ENCODE measurements at regions of chr17 and their contacts with region 1.

Region 1: GRCh38 chr17:29124117-29124924 is 55.9 kb downstream of the MYO18A start:
- DNase-seq: peak in 14 of 35 experiments; percentile 1 to 71 (median 24)
- ATAC-seq: peak; percentile 76 to 90 (median 86)
- H3K4me3 ChIP-seq: no peak overlapping the region
- H3K4me3 Mint-ChIP-seq: no peak overlapping the region
- H3K27ac ChIP-seq: no peak overlapping the region
- H3K27ac Mint-ChIP-seq: no peak overlapping the region
- H3K4me1 ChIP-seq: peaks cover 0 to 8% of the 10 kb centered on the region in 2 experiments
- H3K4me1 Mint-ChIP-seq: peaks cover 5 to 9% (median 9%) of the 10 kb centered on the region in 3 donors
- H3K27me3 ChIP-seq: no peaks in the 10 kb centered on the region
- H3K27me3 Mint-ChIP-seq: no peaks in the 10 kb centered on the region

Region 2: DNA sequence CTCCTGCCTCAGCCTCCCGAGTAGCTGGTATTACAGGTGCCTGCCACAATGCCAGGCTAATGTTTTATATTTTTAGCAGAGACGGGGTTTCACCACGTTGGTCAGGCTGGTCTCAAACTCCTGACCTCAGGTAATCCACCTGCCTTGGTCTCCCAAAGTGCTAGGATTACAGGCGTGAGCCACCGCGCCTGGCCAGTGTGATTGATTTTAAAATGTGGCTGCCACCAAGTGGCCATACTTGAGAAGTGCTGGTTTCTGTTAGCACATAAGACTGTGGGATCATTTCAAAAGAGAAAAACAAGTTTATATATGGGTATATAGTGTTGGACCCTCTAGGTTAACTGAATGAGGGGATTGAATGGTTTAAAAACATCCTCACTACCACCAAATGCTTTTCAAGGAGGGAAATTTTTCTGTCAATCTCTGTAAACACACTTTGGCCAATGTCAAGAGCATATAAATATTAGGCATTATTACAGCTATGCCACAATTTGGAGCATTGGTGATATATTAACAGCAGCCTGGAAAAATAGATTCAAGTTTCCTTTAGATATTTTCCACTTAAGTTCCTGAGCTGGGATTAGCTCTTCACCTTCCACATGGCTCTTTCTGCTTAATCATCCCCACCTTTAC is 207.9 kb before region 1 on chr17:
- CTCF ChIA-PET with region 1: no interaction called
- POLR2A ChIA-PET with region 1: no interaction called
- DNase-seq: peak in 23 of 35 experiments; percentile 23 to 66 (median 38)
- ATAC-seq: peak; percentile 79 to 82 (median 80)
- H3K4me3 ChIP-seq: no peak overlapping the region
- H3K4me3 Mint-ChIP-seq: no peak overlapping the region
- H3K27ac ChIP-seq: no peak overlapping the region
- H3K27ac Mint-ChIP-seq: peak overlapping the region; percentile 71 to 74
- H3K4me1 ChIP-seq: no peaks in the 10 kb centered on the region
- H3K4me1 Mint-ChIP-seq: peaks cover 7 to 12% (median 10%) of the 10 kb centered on the region in 3 donors
- H3K27me3 ChIP-seq: no peaks in the 10 kb centered on the region
- H3K27me3 Mint-ChIP-seq: no peaks in the 10 kb centered on the region

Region 3: DNA sequence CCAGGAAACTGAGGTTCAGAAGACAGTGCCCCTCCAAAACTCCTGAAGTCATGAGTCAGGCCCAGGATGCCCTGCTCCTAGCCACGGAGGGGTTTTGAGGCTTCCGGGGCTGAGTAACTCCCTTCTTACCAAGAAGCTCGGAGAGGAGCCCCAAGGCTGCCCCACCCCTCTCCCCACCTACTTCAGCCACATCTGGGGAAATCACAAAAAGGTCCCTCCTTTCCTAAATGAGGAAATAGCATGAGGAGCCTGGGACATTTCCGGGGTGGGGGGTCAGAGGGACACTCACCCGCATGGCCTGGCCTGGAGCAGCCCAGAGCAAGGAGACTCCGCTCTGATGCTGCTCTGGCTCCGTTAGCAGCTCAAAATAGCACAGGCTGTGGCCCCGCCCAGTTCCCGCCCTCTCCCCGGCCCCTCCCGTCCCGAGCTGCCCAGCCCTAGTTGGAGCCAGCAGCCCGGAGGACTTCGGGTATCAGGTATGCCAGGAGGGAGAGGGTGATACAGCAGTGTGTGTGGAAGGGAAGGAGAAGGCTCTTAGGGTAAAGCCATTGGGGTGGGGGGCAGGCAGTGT is 15.8 kb after region 1 on chr17:
- CTCF ChIA-PET with region 1: interaction called, 3 to 14 read pairs
- POLR2A ChIA-PET with region 1: interaction called, 3 to 4 read pairs
- DNase-seq: peak; percentile 44 to 81 (median 62)
- ATAC-seq: peak; percentile 64 to 78 (median 76)
- H3K4me3 ChIP-seq: peak overlapping the region; percentile 66 to 81
- H3K4me3 Mint-ChIP-seq: peak overlapping the region; percentile 88 to 89 (median 88)
- H3K27ac ChIP-seq: peak overlapping the region; percentile 77
- H3K27ac Mint-ChIP-seq: peak overlapping the region; percentile 97 to 98
- H3K4me1 ChIP-seq: peaks cover 30 to 74% of the 10 kb centered on the region in 2 experiments
- H3K4me1 Mint-ChIP-seq: peaks cover 65 to 75% (median 73%) of the 10 kb centered on the region in 3 donors
- H3K27me3 ChIP-seq: no peaks in the 10 kb centered on the region
- H3K27me3 Mint-ChIP-seq: no peaks in the 10 kb centered on the region

Region 4: DNA sequence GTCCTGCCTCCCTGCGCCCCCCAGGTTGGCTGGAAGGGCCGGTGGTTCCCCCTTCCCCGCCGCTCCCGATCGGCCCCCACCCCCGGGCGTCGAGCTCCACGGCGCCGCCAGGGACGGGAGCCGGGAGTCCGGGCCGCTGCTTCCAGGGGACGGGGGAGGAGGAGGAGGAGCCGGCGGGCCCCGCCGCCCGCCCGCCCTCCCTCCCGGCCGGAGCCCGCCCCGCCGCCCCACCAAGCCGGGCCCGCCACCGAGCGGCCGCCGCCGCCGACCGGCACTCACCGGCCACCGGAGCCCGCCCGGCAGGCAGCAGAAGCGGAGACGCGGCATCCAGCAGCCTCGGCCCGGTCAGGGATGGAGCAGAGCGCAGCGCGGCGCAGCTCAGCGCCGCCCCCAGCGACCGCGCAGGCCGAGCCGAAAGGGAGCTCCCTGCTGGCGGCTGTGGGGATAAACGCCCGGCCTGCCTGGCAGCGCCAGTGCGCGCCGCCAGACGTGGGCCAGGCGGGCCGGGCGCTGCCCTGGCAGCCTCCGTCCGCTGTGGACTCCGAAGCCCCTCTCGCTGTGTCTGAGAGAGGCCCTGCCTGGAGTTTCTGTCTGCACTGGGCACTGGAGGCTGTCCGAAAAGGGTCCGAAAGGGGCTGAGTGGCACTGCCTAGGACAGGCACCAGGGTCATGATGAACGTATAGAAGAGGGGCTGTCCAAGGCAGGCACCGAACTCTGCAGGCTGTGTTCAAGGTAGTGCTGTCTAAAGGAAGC is 55.9 kb after region 1 on chr17 and contains the start of gene MYO18A:
- CTCF ChIA-PET with region 1: interaction called, 4 to 12 read pairs
- POLR2A ChIA-PET with region 1: no interaction called
- DNase-seq: peak; percentile 37 to 88 (median 70)
- ATAC-seq: peak; percentile 90 to 97 (median 92)
- H3K4me3 ChIP-seq: peak within 1 kb of the TSS; percentile 29 to 33
- H3K4me3 Mint-ChIP-seq: peak within 1 kb of the TSS; percentile 55 to 85 (median 64)
- H3K27ac ChIP-seq: no peak within 1 kb of the TSS
- H3K27ac Mint-ChIP-seq: no peak within 1 kb of the TSS
- H3K4me1 ChIP-seq: peaks cover 5 to 32% of the 10 kb centered on the region in 2 experiments
- H3K4me1 Mint-ChIP-seq: peaks cover 14 to 29% (median 16%) of the 10 kb centered on the region in 3 donors
- H3K27me3 ChIP-seq: no peaks in the 10 kb centered on the region
- H3K27me3 Mint-ChIP-seq: no peaks in the 10 kb centered on the region
- total RNA-seq, gene MYO18A: 119 to 151 (median 145) TPM

Region 5: DNA sequence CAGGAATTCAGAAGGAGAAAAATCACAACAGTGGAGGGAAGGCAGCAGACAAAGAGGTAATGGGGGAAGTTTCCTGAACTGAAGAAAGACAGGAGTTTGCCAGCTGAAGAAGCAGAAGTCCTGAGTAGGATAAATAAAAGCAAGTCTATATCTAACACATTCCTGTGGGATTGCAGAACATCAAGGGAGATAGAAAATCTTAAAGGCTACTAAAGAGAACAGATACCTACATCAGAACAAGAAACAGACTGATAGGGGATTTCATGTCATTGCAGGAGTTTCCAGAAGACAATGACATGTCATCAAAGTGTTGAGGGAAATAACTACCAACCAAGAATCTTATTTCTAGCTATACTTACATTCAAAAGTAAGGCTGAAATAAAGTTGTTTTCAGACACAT is 101.1 kb after region 1 on chr17:
- CTCF ChIA-PET with region 1: interaction called in 1 of 2 experiments, 3 read pairs
- POLR2A ChIA-PET with region 1: interaction called in 1 of 2 experiments, 18 read pairs
- DNase-seq: no peak
- ATAC-seq: no peak
- H3K4me3 ChIP-seq: no peak overlapping the region
- H3K4me3 Mint-ChIP-seq: no peak overlapping the region
- H3K27ac ChIP-seq: no peak overlapping the region
- H3K27ac Mint-ChIP-seq: no peak overlapping the region
- H3K4me1 ChIP-seq: no peaks in the 10 kb centered on the region
- H3K4me1 Mint-ChIP-seq: no peaks in the 10 kb centered on the region
- H3K27me3 ChIP-seq: no peaks in the 10 kb centered on the region
- H3K27me3 Mint-ChIP-seq: no peaks in the 10 kb centered on the region

Region 6: GRCh38 chr17:29293890-29294579 is 169.7 kb after region 1 on chr17 and contains the start of gene NUFIP2:
- CTCF ChIA-PET with region 1: interaction called in 1 of 2 experiments, 14 read pairs
- POLR2A ChIA-PET with region 1: interaction called in 1 of 2 experiments, 5 read pairs
- DNase-seq: peak; percentile 96 to 99 (median 98)
- ATAC-seq: peak; percentile 85 to 90 (median 88)
- H3K4me3 ChIP-seq: peak within 1 kb of the TSS; percentile 78 to 98
- H3K4me3 Mint-ChIP-seq: peak within 1 kb of the TSS; percentile 99 to 100 (median 100)
- H3K27ac ChIP-seq: peak within 1 kb of the TSS; percentile 87
- H3K27ac Mint-ChIP-seq: peak within 1 kb of the TSS; percentile 100
- H3K4me1 ChIP-seq: peaks cover 22 to 34% of the 10 kb centered on the region in 2 experiments
- H3K4me1 Mint-ChIP-seq: peaks cover 40 to 51% (median 41%) of the 10 kb centered on the region in 3 donors
- H3K27me3 ChIP-seq: no peaks in the 10 kb centered on the region
- H3K27me3 Mint-ChIP-seq: no peaks in the 10 kb centered on the region
- total RNA-seq, gene NUFIP2: 60.7 to 76.2 (median 66.4) TPM

Measured in T-cell (primary cell).